ENCODE measurements at regions of chr5 and their contacts with region 1.

Region 1: DNA sequence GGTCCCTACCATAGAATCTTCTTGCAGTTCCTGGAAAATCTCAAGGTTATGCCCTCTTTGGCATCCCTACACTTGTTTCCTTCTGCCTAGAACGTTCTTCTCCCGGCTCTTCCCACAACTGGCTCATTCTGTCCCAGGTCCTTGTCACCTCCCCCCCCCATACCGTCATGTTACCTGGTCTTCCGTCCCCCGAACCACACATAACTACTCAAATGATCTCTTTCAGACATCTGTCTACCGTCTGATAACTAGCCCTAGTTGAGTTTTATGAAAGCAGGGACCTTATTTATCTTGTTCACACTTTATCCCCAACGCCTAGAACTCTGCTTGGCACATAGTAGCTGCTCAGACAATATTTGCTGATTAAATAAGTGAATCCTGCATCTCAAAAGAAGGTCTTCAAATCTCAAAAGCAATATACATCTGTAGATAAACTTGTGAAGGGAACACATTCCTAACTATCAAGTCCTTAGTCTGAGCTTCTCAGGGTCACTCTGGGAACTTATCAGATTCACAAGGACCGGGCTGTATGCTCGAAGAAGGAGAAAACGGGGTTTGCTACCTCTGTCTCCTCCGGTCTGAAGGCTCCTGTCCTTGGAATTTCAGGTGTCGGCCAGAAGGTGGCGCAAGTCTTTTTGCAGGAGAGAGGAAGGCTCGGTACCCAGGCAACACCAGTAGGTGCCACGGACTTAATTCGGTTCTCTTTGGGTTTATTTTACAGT is 30.0 kb downstream of the LCP2 start:
- DNase-seq: peak; percentile 90
- H3K4me3 Mint-ChIP-seq: peak overlapping the region; percentile 57
- H3K27ac Mint-ChIP-seq: peak overlapping the region; percentile 86
- H3K4me1 Mint-ChIP-seq: peaks cover 88% of the 10 kb centered on the region
- H3K27me3 Mint-ChIP-seq: no peaks in the 10 kb centered on the region

Region 2: DNA sequence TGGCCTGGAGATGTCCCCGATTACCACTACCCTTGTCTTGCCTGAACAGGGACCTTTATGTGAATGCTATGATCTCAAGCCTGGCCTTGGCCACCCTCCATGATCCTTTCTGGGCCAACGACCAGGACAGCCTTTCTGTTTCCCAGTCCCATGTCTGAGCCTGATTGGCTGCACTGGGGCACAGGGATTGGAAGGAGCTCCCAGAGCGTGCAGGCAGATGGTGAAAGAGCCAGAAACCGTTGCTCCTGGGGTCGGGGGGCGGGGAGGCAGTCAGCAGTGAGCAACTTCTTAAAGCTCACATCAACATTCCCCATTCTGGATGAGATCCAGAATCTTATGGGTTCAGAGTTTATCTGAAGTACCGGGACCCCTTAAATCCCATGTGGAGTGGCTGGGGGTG is 371.7 kb before region 1 on chr5:
- CTCF ChIA-PET with region 1: no interaction called
- intact Hi-C with region 1: no loop called
- DNase-seq: no peak
- H3K4me3 Mint-ChIP-seq: no peak overlapping the region
- H3K27ac Mint-ChIP-seq: no peak overlapping the region
- H3K4me1 Mint-ChIP-seq: peaks cover 3% of the 10 kb centered on the region
- H3K27me3 Mint-ChIP-seq: no peaks in the 10 kb centered on the region

Region 3: DNA sequence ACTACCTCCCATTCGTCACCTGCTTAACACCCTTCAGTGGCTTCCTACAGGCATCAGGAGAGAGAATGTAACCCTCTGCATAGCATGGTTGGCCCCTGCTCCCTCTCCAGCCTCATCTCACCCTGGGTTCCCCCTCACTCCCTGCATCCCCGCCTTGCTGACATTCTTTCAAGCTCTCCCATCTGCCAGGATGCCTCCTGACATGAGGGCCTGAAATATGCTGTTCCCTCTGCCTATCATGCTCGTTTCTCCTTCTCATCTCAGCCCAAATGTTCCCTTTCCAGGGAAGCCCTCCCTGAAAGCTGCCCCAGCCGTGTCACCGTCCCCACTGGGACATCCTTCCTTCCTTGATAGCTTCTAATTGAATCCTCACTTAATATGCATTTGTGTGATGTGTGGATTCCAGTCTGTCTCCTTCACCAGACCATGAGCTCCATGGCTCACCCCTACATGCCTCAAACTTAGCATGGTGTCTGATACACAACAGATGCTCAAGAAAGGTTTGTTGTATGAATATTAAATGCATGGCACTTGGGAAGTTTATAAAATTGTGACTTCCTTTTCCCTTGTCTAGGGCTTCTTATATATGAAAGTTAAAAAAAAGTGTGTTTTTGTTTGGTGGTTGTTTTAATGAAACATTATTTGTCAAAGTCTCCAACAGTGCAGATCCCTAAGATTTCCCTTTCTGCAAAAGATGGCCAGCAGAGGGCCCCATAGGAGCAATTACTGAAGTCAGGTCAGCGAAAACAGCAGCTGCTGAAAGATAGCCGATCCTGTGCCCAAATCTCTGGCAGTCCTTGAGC is 42.1 kb before region 1 on chr5:
- CTCF ChIA-PET with region 1: interaction called, 60 read pairs
- intact Hi-C with region 1: loop called (anchors 1 kb)
- DNase-seq: peak; percentile 91
- H3K4me3 Mint-ChIP-seq: no peak overlapping the region
- H3K27ac Mint-ChIP-seq: no peak overlapping the region
- H3K4me1 Mint-ChIP-seq: peaks cover 7% of the 10 kb centered on the region
- H3K27me3 Mint-ChIP-seq: no peaks in the 10 kb centered on the region

Region 4: DNA sequence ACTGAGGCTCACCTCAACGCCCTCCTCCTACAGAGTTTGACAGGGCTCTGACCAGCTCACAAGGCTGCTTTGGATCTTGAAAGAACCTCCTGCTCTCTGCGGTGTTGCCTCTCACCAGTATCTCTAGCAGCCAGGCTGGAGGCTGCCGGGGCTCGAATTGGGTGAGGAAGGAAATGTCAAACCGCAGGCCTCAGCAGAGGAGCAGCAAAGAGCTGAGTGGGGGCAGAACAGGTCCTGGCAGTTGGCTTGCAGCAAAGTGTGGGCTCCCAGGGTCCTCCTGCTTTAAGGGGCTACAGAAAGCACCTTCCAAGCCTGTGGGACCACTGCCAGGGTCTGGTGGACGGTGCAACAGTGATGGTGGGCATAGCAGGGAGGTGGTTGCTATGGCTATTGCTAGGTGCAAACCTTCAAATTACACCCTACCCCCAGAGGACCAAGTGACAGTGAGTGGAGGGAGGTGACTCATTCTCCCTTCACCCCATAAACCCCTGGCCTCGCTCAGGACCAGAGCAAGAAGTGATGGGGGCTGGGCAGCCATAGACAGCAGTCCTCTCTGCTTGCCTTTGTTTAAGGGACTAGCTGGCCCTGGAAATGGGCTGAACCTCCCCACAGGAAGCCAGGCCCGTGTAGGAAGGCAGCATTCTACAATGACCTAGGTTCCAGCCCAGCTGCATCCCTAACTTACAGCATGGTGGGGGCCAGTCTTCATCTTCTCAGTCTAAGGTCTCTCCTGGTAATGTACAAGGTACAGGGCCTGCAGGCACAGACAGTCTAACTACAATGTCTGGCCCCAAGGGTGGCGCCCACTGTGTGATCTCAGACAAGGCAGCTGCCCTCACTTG is 11.2 kb after region 1 on chr5:
- CTCF ChIA-PET with region 1: interaction called, 46 read pairs
- intact Hi-C with region 1: loop called (anchors 1 kb)
- DNase-seq: peak; percentile 90
- H3K4me3 Mint-ChIP-seq: peak overlapping the region; percentile 45
- H3K27ac Mint-ChIP-seq: peak overlapping the region; percentile 83
- H3K4me1 Mint-ChIP-seq: peaks cover 95% of the 10 kb centered on the region
- H3K27me3 Mint-ChIP-seq: no peaks in the 10 kb centered on the region

Region 5: DNA sequence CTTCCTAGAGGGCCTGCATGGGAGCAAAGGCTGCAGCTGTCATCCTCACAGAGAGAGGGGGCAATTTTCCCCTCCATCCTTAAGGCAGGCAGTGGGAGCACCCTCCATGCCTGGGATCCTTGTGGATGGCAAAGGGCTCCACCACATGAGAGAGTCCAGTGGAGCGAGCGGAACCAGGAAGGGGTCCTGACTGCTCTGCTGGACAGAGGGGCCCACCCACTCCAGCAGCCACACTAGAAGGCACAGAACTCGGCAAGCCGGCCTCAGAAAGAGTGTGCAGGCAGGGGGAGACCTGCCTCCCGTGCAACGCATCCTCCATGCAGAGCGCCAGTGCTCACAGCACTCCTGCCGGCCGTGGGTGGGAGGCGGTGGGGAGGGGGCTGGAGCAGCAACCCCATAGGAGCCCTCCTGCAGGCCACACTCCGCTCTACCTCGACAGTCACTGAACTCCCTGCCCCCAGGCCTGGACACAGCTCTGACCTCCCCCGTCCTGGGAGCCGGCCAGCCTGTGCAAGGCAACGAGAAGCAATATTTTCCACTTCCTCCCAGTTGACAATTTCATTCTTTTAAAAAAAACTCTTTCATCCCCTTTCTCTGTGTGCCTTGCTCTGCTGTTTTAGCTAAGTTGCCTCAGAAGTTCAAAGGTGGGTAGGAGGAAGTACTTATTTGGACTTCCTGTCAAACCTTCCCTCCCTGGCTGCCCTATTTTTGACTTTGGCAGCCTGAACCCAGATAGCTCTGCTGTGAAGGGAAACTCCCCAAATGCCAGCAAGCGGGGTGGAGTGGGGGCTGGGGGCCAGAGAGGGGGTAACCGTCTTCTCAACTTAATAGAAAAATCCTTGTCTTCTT is 35.3 kb after region 1 on chr5:
- CTCF ChIA-PET with region 1: interaction called, 281 read pairs
- intact Hi-C with region 1: no loop called
- DNase-seq: peak; percentile 69
- H3K4me3 Mint-ChIP-seq: peak overlapping the region; percentile 78
- H3K27ac Mint-ChIP-seq: peak overlapping the region; percentile 96
- H3K4me1 Mint-ChIP-seq: peaks cover 93% of the 10 kb centered on the region
- H3K27me3 Mint-ChIP-seq: no peaks in the 10 kb centered on the region

Region 6: GRCh38 chr5:170338933-170339779 is 71.6 kb after region 1 on chr5:
- CTCF ChIA-PET with region 1: interaction called, 209 read pairs
- intact Hi-C with region 1: loop called (anchors 1 kb)
- DNase-seq: peak; percentile 86
- H3K4me3 Mint-ChIP-seq: no peak overlapping the region
- H3K27ac Mint-ChIP-seq: peak overlapping the region; percentile 66
- H3K4me1 Mint-ChIP-seq: peaks cover 46% of the 10 kb centered on the region
- H3K27me3 Mint-ChIP-seq: no peaks in the 10 kb centered on the region

Region 7: DNA sequence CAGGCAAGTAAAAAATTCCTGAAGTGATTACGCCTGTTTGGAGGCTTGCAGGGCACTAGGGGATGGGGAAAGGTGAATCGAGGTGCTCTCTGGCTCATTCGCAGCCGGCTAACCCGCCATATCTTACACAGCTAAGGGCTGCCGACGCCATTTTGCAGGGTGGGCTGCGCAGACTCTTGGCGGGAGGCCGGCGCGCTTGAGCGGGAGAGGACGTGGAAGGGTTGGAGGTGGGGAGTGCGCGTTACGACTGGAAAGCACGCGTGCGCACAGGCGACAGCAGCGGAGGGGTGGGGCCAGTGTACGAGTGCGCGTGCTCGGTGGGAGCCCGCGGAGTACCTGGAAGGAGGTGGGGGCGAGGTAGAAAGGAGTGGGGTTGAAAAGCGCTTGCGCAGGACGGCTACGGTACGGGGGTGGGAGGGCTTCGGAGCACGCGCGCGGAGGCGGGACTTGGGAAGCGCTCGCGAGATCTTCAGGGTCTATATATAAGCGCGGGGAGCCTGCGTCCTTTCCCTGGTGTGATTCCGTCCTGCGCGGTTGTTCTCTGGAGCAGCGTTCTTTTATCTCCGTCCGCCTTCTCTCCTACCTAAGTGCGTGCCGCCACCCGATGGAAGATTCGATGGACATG is 1119.9 kb after region 1 on chr5 and contains the start of gene NPM1:
- CTCF ChIA-PET with region 1: no interaction called
- intact Hi-C with region 1: loop called (anchors 10 kb)
- DNase-seq: peak; percentile 98
- H3K4me3 Mint-ChIP-seq: peak within 1 kb of the TSS; percentile 98
- H3K27ac Mint-ChIP-seq: peak within 1 kb of the TSS; percentile 98
- H3K4me1 Mint-ChIP-seq: peaks cover 37% of the 10 kb centered on the region
- H3K27me3 Mint-ChIP-seq: no peaks in the 10 kb centered on the region
- total RNA-seq, gene NPM1: 3,194 to 3,467 TPM